K562 (cell line): ENCODE measurements at regions of chr3 and their contacts with region 1.

Region 1: GRCh38 chr3:40317061-40317855 is 7.8 kb downstream of the EIF1B start:
- DNase-seq: peak; percentile 68 to 81 (median 73)
- ATAC-seq: peak; percentile 62
- H3K4me3 ChIP-seq: no peak overlapping the region
- H3K27ac ChIP-seq: no peak overlapping the region
- H3K4me1 ChIP-seq: peaks cover 4 to 25% of the 10 kb centered on the region in 2 experiments
- H3K27me3 ChIP-seq: peaks cover 0 to 4% of the 10 kb centered on the region in 2 experiments; a peak in 1 of 5 replicates
- CTCF ChIP-seq: peak; percentile 82 to 96 (median 83)
- EP300 ChIP-seq: no peak
- POLR2A ChIP-seq: no peak
- RAD21 ChIP-seq: peak; percentile 97 to 99

Region 2: DNA sequence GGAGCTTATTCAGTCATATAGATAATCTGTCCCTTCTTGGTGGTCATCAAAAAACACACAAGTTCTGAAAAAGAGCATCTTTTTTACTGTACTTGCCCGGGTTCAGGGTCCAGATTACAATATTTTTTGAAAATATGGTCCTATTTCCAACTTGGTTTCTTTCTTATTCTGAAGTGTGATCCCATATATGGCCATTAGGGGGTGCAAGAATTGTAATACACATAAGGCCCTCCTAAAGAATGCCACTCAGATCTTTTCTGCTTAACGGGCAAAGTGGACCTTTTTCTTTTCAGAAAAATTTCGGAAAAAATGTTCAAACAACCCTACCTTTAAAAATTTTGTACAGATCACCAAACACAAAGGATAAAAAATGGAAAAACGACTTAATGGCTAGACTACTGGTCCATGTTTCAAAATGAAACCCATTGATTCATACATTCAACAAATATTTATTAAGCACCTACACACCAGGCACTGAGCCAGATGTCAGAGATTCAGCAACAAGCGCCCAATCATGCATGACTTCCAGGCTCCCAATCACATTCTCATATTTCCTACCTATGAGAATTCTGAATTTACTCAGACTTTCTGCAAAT is 609.8 kb before region 1 on chr3:
- CTCF ChIA-PET with region 1: interaction called, 5 read pairs
- POLR2A ChIA-PET with region 1: no interaction called
- in situ Hi-C with region 1: no loop called
- intact Hi-C with region 1: loop called (anchors 5 kb)
- DNase-seq: peak; percentile 46 to 55 (median 52)
- ATAC-seq: peak; percentile 79
- H3K4me3 ChIP-seq: no peak overlapping the region
- H3K27ac ChIP-seq: no peak overlapping the region
- H3K4me1 ChIP-seq: no peaks in the 10 kb centered on the region
- H3K27me3 ChIP-seq: no peaks in the 10 kb centered on the region
- CTCF ChIP-seq: peak; percentile 52 to 70 (median 59); a peak in 5 of 6 replicates
- EP300 ChIP-seq: no peak
- POLR2A ChIP-seq: no peak
- RAD21 ChIP-seq: peak; percentile 16 to 64; a peak in 3 of 4 replicates

Region 3: DNA sequence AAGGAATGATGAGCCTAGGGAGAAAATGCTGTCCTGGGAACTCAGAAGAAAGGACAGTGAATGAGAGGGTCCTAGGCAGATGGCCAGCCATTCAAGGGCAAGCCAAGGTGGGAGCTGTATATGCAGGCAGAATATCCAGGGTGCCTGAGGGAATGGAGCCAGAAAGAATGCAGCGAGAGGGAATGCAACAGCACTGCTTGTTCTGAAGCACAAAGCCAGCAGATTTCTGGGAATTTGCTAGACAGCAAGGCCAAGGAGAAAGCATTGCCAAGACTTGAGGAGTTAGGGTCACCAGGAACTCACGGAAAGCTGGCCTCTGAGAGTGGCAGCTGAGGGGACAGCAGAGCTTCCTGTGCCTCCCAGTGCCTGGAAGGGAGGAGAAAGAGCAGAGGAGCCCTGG is 307.3 kb before region 1 on chr3:
- CTCF ChIA-PET with region 1: no interaction called
- POLR2A ChIA-PET with region 1: no interaction called
- in situ Hi-C with region 1: no loop called
- intact Hi-C with region 1: loop called (anchors 10 kb)
- DNase-seq: no peak
- ATAC-seq: no peak
- H3K4me3 ChIP-seq: no peak overlapping the region
- H3K27ac ChIP-seq: no peak overlapping the region
- H3K4me1 ChIP-seq: no peaks in the 10 kb centered on the region
- H3K27me3 ChIP-seq: no peaks in the 10 kb centered on the region
- CTCF ChIP-seq: no peak
- EP300 ChIP-seq: no peak
- POLR2A ChIP-seq: no peak
- RAD21 ChIP-seq: no peak

Region 4: GRCh38 chr3:40152482-40153133 is 164.7 kb before region 1 on chr3:
- CTCF ChIA-PET with region 1: no interaction called
- POLR2A ChIA-PET with region 1: no interaction called
- in situ Hi-C with region 1: no loop called
- intact Hi-C with region 1: no loop called
- DNase-seq: no peak
- ATAC-seq: no peak
- H3K4me3 ChIP-seq: no peak overlapping the region
- H3K27ac ChIP-seq: no peak overlapping the region
- H3K4me1 ChIP-seq: no peaks in the 10 kb centered on the region
- H3K27me3 ChIP-seq: no peaks in the 10 kb centered on the region
- CTCF ChIP-seq: no peak
- EP300 ChIP-seq: no peak
- POLR2A ChIP-seq: no peak
- RAD21 ChIP-seq: no peak

Region 5: GRCh38 chr3:40191850-40192448 is 125.3 kb before region 1 on chr3:
- CTCF ChIA-PET with region 1: interaction called, 90 read pairs
- POLR2A ChIA-PET with region 1: interaction called, 35 read pairs
- in situ Hi-C with region 1: loop called (anchors 5 kb)
- intact Hi-C with region 1: loop called (anchors 1 kb)
- DNase-seq: peak; percentile 78 to 83 (median 81)
- ATAC-seq: peak; percentile 83
- H3K4me3 ChIP-seq: no peak overlapping the region
- H3K27ac ChIP-seq: no peak overlapping the region
- H3K4me1 ChIP-seq: peaks cover 3 to 9% of the 10 kb centered on the region in 2 experiments; a peak in 2 of 5 replicates
- H3K27me3 ChIP-seq: peaks cover 0 to 34% of the 10 kb centered on the region in 2 experiments; a peak in 2 of 5 replicates
- CTCF ChIP-seq: peak; percentile 87 to 98 (median 91)
- EP300 ChIP-seq: no peak
- POLR2A ChIP-seq: no peak
- RAD21 ChIP-seq: peak; percentile 89 to 93